Left cardiac atrium (tissue), 4 donors: ENCODE measurements at regions of chr4 and their contacts with region 1.

Region 1: GRCh38 chr4:120156120-120156718 is 89.6 kb upstream of the MAD2L1 start:
- DNase-seq: no peak
- ATAC-seq: no peak

Region 2: DNA sequence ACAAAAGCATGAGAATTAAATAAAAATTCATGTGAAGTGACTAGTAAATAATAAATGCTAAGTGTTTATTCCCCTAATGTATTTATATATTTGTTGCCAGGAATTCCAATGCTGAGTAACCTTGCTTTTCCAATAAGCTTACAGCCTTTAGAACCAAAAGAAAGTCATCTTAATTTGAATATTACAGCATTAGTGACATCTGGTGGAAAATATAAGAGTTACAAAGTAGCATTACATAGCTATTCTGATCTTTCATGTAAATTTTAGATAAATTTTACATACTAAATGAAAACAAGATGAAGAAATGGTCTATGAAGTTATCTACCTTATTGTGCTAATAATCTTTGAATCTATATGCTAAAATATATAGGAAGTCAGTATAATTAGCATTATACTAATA is 100.0 kb before region 1 on chr4:
- intact Hi-C with region 1: no loop called
- DNase-seq: no peak
- ATAC-seq: no peak

Region 3: GRCh38 chr4:120718979-120719566 is 562.9 kb after region 1 on chr4:
- intact Hi-C with region 1: loop called in 1 of 2 experiments (anchors 10 kb)
- DNase-seq: peak; percentile 29
- ATAC-seq: peak; percentile 81 to 85

Region 4: GRCh38 chr4:120922381-120923206 is 766.4 kb after region 1 on chr4 and contains the start of gene PRDM5:
- intact Hi-C with region 1: loop called in 1 of 2 experiments (anchors 10 kb)
- DNase-seq: peak; percentile 70
- ATAC-seq: peak; percentile 85 to 86
- total RNA-seq, gene PRDM5: 8.2 to 14.2 TPM

Region 5: GRCh38 chr4:121096629-121097028 is 940.4 kb after region 1 on chr4:
- intact Hi-C with region 1: loop called (anchors 5 to 10 kb)
- DNase-seq: no peak
- ATAC-seq: no peak

Region 6: DNA sequence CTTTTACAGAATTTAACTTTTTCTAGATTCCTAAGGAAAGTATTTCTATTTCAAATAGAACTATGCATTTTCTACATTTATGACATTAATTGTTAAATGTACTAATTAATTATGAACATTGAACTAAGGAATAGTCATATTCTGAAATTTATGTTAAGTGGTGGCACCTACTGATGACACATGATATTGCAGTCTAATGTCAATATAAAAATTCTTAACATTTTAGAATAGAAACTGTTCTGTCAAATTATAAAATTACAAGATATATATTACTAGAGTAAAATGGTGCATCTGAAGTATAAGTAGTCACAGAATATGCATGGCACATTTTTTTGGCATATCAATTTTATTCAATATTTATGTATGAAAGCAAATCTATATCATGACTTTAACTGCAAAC is 956.3 kb after region 1 on chr4:
- intact Hi-C with region 1: loop called in 1 of 2 experiments (anchors 5 kb)
- DNase-seq: no peak
- ATAC-seq: no peak

Region 7: GRCh38 chr4:121252224-121252806 is 1096.1 kb after region 1 on chr4:
- intact Hi-C with region 1: loop called (anchors 2 to 10 kb)
- DNase-seq: peak; percentile 63
- ATAC-seq: peak; percentile 69 to 72